Activated CD4-positive, alpha-beta memory T cell treated with anti-CD3 and anti-CD28 coated beads, Interleukin-2, amount 10 ng/mL, durations not matched to agents 7 days and 5 days (primary cell): ENCODE measurements at regions of chr12 and their contacts with region 1.

Region 1: GRCh38 chr12:122825773-122826724 is 9.2 kb upstream of the HIP1R start:
- DNase-seq: no peak
- H3K4me3 Mint-ChIP-seq: no peak overlapping the region
- H3K27ac Mint-ChIP-seq: no peak overlapping the region
- H3K4me1 Mint-ChIP-seq: peaks cover 4% of the 10 kb centered on the region
- H3K27me3 Mint-ChIP-seq: peaks cover 27% of the 10 kb centered on the region

Region 2: DNA sequence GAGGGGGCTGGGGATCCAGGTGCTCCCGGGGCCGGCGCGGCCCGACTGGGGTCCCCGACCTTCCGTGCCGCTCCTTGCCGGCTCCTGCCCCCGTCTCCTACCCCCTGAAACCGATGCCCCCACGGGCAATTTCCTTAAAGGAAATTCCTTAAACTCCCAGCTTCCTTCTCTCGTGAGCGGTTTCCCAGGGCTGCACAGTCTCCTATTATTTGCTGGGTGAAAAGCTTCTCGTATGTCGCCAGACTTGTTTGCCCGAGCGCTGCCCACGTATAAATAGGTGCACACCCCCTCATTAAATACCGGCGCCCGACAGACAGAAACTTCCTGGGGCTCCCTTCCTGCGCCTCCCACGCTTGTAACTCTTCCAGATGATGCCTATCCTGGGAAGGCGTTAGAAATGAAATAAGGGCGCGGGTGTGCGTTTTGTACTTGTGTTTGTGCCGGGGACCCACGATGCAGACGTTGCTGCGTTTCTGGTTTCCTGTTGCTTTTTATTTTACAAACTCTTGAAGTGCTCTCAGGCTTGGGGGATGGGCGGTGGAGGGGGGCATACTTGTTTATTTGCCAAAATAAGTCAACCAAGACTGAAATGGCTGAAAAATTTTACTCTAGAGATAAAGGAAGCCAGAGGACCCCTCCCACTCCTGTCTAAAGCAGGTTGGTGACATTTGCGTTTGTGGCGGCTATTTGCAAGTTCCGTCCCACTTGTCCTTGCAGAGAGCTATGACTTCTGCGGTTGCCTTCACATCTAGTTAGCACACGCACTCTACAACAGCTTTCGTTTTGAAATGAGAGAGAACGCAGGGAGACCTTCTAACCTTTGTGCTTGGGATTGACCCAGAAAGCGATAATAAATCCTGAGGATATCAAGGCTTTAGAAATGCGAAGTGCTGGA is 10.2 kb after region 1 on chr12:
- CTCF ChIA-PET with region 1: interaction called, 4 read pairs
- POLR2A ChIA-PET with region 1: interaction called, 10 read pairs
- DNase-seq: peak; percentile 62
- H3K4me3 Mint-ChIP-seq: peak overlapping the region; percentile 88
- H3K27ac Mint-ChIP-seq: peak overlapping the region; percentile 81
- H3K4me1 Mint-ChIP-seq: peaks cover 33% of the 10 kb centered on the region
- H3K27me3 Mint-ChIP-seq: peaks cover 12% of the 10 kb centered on the region